ENCODE measurements at regions of chr17 and their contacts with region 1.

Region 1: DNA sequence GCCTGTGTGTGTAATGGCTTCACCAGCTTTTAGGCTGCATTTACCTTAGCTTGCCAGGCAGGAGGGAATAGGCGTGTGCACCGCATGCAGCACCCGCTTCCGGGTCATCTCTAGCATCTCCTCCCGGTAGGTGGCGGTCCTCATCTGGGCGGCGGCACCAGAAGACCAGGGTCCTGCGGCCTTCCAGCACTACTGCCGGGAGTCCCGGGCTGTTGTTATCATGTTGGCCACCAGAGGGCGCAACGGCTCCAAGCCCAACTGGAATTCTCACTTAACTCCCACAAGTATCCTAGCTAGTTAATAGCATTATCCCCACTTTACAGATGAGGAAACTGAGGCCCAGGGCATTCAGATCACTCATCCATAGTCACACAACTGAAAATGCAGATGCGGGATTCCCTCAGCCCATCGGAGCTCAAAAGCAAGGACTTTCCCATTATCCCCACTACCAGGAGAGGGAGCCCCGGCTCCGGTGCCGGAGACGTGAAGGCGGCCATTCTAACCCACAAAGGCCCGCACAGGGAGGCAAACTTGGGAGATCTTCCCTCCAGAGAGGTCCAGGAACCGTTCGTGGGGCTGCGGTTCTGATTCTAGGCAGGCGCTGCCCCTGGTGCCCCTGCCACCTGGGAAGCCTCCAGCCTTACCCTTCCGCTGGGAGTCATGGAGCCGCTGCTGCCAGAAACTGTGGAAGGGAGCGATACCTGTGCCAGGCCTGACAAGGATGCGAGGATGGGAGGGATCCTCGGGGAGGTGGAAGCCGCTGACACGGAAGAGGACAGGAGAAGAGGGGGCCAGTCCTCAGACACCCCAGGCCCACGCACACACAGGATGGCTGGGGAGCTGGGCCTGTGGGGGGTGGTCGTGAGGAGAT is 23.9 kb downstream of the LGALS9 start:
- DNase-seq: peak; percentile 52
- H3K4me3 Mint-ChIP-seq: no peak overlapping the region
- H3K27ac Mint-ChIP-seq: no peak overlapping the region
- H3K4me1 Mint-ChIP-seq: peaks cover 7% of the 10 kb centered on the region
- H3K27me3 Mint-ChIP-seq: no peaks in the 10 kb centered on the region

Region 2: DNA sequence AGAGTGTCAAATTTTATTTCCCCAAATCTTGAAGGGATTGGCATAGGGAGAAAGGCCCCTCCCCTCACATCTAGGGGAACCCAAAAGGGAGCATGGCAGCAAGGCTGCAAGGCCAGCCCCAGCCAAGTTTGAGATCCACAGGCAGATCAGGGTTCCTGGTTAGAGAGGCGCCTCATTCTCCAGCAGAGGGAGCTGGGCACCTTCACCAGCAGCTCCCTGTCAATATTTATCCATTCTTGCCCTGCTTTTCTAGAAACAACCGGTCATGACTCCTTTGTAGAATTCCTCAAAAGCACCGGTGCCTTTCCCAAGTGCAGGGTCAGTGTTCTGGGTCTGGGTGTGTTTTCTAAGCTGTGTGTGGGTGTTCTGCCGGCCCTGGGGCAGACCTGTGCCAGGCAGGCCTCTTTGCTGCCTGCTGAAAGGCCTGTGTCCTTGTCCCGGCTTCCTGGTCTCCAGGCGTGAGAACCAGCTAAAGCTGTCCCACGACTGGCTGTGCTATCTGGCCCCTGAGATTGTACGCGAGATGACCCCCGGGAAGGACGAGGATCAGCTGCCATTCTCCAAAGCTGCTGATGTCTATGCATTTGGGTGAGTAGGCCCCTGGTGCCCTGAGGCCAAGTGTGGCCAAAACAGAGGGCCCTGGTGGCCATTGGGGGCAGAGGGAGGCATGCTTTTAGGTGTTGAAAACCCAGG is 45.1 kb before region 1 on chr17:
- intact Hi-C with region 1: loop called (anchors 2 kb)
- DNase-seq: no peak
- H3K4me3 Mint-ChIP-seq: no peak overlapping the region
- H3K27ac Mint-ChIP-seq: no peak overlapping the region
- H3K4me1 Mint-ChIP-seq: peaks cover 24% of the 10 kb centered on the region
- H3K27me3 Mint-ChIP-seq: no peaks in the 10 kb centered on the region

Region 3: DNA sequence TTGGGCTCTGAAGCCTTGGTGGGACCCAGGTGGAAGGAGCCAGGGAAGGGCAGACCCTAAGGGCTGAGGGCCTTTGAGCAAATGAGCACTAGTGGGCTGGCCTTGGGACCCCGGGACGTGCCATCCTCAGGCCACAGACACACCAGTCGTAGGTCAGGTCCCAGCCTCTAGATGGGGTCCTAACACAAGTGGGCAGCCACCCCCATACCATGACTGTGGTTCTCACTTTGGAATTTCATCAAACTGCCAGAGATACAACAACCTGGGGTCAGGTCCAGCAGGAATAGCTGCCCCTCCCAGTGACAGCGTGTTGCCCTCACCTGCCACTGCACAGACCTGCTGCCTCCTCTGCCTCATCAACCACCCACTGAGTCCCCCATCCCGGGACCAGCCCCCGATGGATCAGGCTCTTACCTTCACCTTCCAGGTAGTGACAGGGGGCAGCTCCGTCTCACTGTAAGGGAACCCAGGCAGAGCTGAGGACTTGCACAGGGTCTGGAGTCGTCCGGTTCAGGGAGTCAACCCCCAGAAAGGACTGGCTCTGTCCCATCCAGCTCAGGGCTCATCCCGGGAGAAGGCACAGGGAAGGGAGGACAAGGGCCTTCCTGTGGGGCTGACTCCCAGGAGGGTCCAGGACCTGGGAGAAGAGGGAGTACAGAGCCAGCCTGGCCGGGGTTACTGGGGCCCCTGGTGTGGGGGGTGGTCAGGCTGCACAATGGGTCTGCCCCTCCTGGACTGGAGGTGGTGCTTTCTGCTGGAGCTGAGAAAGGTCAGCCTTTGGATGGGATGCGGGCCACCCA is 16.1 kb after region 1 on chr17:
- intact Hi-C with region 1: no loop called
- DNase-seq: no peak
- H3K4me3 Mint-ChIP-seq: no peak overlapping the region
- H3K27ac Mint-ChIP-seq: no peak overlapping the region
- H3K4me1 Mint-ChIP-seq: no peaks in the 10 kb centered on the region
- H3K27me3 Mint-ChIP-seq: no peaks in the 10 kb centered on the region

Region 4: GRCh38 chr17:27721797-27722196 is 66.9 kb after region 1 on chr17:
- intact Hi-C with region 1: no loop called
- DNase-seq: no peak
- H3K4me3 Mint-ChIP-seq: no peak overlapping the region
- H3K27ac Mint-ChIP-seq: no peak overlapping the region
- H3K4me1 Mint-ChIP-seq: no peaks in the 10 kb centered on the region
- H3K27me3 Mint-ChIP-seq: peaks cover 3% of the 10 kb centered on the region

Region 5: DNA sequence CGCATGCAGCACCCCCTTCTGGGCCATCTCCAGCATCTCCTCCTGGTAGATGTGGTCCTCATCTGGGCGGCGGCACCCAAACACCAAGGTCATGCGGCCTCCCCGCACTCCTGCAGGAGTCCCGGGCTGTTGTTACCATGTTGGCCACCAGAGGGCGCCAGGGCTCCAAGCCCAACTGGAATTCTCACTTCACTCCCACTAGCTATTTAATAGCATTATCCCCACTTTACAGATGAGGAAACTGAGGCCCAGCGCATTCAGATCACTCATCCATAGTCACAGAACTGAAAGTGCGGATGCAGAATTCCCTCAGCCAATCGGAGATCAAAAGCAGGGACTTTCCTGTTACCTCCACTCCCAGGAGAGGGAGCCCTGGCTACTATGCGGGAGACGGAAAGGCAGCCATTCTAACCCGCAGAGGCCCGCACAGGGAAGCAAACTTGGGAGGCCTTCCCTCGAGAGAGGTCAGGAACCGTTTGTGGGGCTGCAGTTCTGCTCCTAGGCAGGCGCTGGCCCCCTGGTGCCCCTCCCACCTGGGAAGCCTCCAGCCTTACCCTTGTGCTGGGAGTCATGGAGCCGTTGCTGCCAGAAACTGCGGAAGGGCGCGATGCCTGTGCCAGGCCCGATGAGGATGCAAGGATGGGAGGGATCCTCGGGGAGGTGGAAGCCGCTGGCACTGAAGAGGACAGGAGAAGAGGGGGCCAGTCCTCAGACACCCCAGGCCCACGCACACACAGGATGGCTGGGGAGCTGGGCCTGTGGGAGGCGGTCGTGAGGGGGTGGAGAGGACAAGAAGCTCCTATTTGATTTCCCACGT is 105.4 kb after region 1 on chr17:
- intact Hi-C with region 1: loop called (anchors 1 kb)
- DNase-seq: peak; percentile 58
- H3K4me3 Mint-ChIP-seq: no peak overlapping the region
- H3K27ac Mint-ChIP-seq: no peak overlapping the region
- H3K4me1 Mint-ChIP-seq: no peaks in the 10 kb centered on the region
- H3K27me3 Mint-ChIP-seq: no peaks in the 10 kb centered on the region

Region 6: DNA sequence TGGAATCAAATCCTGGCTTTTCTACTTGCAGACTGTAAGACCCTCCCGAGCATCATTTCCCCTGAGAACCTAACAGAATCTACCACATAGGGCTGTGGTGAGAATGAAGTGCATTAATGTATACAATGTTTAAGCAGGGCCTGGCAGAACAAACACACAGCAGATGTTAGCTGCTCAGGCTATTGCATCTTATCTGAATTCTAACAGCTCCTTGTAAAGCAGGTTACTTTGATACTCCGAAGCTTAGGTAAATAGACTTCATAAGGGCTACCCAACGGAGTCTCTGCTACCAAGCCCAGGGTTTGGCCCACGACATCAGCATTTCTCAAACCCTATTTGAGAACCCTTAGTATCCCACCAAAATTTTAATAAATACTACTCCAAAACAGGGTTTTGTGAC is 169.9 kb after region 1 on chr17:
- intact Hi-C with region 1: no loop called
- DNase-seq: no peak
- H3K4me3 Mint-ChIP-seq: no peak overlapping the region
- H3K27ac Mint-ChIP-seq: no peak overlapping the region
- H3K4me1 Mint-ChIP-seq: no peaks in the 10 kb centered on the region
- H3K27me3 Mint-ChIP-seq: peaks cover 8% of the 10 kb centered on the region

Region 7: GRCh38 chr17:27868576-27868975 is 213.7 kb after region 1 on chr17:
- intact Hi-C with region 1: loop called (anchors 5 kb)
- DNase-seq: no peak
- H3K4me3 Mint-ChIP-seq: no peak overlapping the region
- H3K27ac Mint-ChIP-seq: no peak overlapping the region
- H3K4me1 Mint-ChIP-seq: no peaks in the 10 kb centered on the region
- H3K27me3 Mint-ChIP-seq: peaks cover 9% of the 10 kb centered on the region

Measured in activated T-helper 2 cell treated with anti-CD3 and anti-CD28 coated beads, Interferon-gamma antibody, Interleukin-2, Interleukin-4, amounts not matched to agents 10 μg/mL and 5 μg/mL and 100 μg/mL, durations not matched to agents 14 hours and 24 hours and 36 hours (primary cell).